SK-N-SH (cell line): ENCODE measurements at regions of chr22 and their contacts with region 1.

Region 1: GRCh38 chr22:31451709-31452571 is 37.7 kb downstream of the EIF4ENIF1 start:
- DNase-seq: peak; percentile 27
- H3K4me3 ChIP-seq: no peak overlapping the region
- H3K27ac ChIP-seq: peak overlapping the region in 1 of 2 experiments; percentile 7; a peak in 1 of 4 replicates
- H3K4me1 ChIP-seq: no peaks in the 10 kb centered on the region
- H3K27me3 ChIP-seq: no peaks in the 10 kb centered on the region
- CTCF ChIP-seq: peak; percentile 71
- EP300 ChIP-seq: no peak
- RAD21 ChIP-seq: peak; percentile 35

Region 2: GRCh38 chr22:31465307-31465706 is 13.4 kb after region 1 on chr22:
- CTCF ChIA-PET with region 1: interaction called, 20 read pairs
- POLR2A ChIA-PET with region 1: no interaction called
- DNase-seq: no peak
- H3K4me3 ChIP-seq: no peak overlapping the region
- H3K27ac ChIP-seq: no peak overlapping the region
- H3K4me1 ChIP-seq: no peaks in the 10 kb centered on the region
- H3K27me3 ChIP-seq: no peaks in the 10 kb centered on the region
- CTCF ChIP-seq: no peak
- EP300 ChIP-seq: no peak
- RAD21 ChIP-seq: no peak

Region 3: GRCh38 chr22:31742115-31742514 is 290.2 kb after region 1 on chr22:
- CTCF ChIA-PET with region 1: no interaction called
- POLR2A ChIA-PET with region 1: no interaction called
- DNase-seq: no peak
- H3K4me3 ChIP-seq: no peak overlapping the region
- H3K27ac ChIP-seq: no peak overlapping the region
- H3K4me1 ChIP-seq: no peaks in the 10 kb centered on the region; a peak in 2 of 4 replicates
- H3K27me3 ChIP-seq: no peaks in the 10 kb centered on the region
- CTCF ChIP-seq: no peak
- EP300 ChIP-seq: no peak
- RAD21 ChIP-seq: no peak